Heart right ventricle (tissue), 16 donors: ENCODE measurements at regions of chr1 and their contacts with region 1.

Region 1: DNA sequence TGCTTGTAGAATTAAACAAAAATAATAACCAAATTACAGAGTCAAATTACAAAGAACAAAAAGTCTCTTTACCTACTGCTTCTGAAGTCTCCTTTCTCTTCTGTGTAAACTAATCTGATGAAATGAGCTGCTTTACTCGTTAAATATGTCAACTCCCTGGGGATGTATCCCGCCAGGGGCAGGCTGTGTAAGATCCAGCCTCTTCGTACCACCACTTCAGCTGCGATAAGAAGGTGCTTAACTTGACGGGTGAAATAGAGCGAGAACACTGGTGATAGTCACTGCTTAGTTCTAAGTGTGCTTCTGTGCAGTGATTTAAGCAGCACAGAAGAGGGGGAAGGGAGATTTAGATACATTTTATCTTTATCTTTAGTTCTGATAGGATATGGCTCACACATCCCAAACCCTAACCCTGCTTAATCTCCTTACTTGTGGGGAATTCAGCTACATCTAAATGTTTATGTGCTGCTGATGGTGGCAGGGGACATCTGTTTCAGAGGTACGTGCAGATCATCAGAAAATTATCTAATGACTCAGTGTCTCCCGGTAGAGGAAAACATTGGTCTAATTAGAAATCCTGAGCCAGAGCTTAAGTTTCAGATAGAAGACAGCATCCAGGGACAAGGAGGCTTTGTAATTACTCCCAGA is 46.0 kb downstream of the RHOU start:
- DNase-seq: peak in 1 of 2 donors; percentile 10
- ATAC-seq: peak in 5 of 8 donors; percentile 54 to 85 (median 74)
- H3K4me3 ChIP-seq: no peak overlapping the region
- H3K27ac ChIP-seq: peak overlapping the region in 1 of 10 donors; percentile 18
- H3K4me1 ChIP-seq: peaks cover 0 to 20% (median 8%) of the 10 kb centered on the region in 9 donors
- H3K27me3 ChIP-seq: peaks cover 0 to 58% (median 11%) of the 10 kb centered on the region in 7 donors
- CTCF ChIP-seq: no peak

Region 2: DNA sequence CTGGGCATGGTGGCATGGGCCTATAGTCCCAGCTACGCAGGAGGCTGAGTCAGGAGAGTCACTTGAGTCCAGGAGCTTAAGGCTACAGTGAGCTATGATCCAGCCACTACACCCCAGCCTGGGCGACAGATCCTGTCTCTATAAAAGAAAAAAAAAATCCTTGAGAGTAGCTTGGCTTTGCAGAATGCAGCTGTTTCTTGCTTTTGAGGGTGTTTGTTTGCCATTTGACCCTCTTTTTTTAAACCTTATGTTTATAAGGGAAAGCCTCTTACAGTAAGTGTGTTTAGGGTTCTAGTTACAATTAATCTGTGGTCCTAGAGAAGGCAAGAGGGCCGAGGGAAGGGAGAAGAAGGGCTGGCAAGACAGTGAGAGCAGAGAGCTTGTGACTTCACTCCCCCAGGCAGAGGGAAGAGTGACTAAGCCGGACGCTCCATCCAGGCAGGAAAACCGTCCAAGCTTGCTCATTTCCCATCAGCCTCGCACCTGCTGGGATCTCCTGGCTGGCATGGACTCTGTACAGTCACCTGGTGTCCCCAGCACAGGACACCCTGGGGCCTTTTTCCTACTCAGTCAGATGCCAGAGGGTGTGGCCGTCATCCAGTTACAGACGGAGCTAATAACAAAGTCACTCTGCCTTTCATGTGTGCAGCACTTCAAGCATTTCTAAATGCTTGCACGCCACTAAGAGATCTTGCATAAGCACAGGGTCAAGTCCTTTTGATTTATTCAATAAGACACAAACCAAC is 1966.4 kb before region 1 on chr1:
- intact Hi-C with region 1: loop called in 1 of 10 experiments (anchors 5 kb)
- DNase-seq: peak; percentile 23 to 74
- ATAC-seq: peak; percentile 76 to 95 (median 91)
- H3K4me3 ChIP-seq: no peak overlapping the region
- H3K27ac ChIP-seq: peak overlapping the region; percentile 40 to 89 (median 72)
- H3K4me1 ChIP-seq: peaks cover 6 to 50% (median 26%) of the 10 kb centered on the region in 9 donors
- H3K27me3 ChIP-seq: no peaks in the 10 kb centered on the region
- CTCF ChIP-seq: no peak

Region 3: DNA sequence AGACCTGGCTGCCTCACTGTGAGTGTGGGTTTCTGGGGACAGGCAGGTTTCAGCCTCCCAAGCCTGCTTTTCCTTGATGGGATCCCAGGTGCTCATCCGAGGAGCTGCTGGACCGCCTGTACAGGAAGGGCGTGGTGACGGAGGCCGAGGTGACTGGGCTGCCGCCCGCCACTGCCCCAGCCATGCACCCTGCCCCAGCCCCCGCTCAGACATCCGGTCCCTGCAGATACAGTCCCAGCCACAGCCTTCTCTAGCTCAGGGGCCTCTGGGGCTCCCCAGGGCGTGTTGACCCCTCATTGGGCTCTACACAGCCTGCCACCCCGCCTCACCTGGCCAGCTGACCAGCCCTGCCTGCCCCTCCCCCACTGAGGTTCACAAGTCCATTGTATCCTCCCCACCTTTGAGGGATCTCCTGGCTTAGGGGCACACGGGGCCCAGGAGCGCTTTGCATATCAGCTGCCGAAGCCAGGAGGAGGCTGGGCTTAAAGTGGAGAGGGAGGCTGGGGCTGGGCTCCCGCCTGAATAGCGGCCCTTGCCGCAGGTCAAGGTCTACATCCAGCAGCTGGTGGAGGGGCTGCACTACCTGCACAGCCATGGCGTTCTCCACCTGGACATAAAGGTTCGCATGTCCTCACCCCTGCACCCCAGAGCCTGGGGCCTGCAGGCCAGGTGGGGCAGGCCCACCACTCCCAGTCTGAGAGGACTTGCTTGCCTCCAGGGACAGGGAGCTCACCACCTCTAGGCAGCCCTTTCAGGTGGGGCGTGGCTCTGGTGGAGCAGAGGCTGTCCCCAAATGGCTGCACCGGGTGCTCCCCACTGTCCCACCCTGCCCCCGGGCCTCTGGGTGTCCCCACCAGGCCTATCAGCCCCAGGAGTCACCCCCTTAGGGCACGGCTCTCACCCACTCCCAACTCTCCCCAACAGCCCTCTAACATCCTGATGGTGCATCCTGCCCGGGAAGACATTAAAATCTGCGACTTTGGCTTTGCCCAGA is 413.2 kb before region 1 on chr1:
- intact Hi-C with region 1: no loop called
- DNase-seq: peak; percentile 35 to 36
- ATAC-seq: peak in 4 of 8 donors; percentile 1 to 23 (median 22)
- H3K4me3 ChIP-seq: peak overlapping the region in 8 of 10 donors; percentile 2 to 53 (median 30)
- H3K27ac ChIP-seq: peak overlapping the region; percentile 50 to 94 (median 84)
- H3K4me1 ChIP-seq: peaks cover 7 to 98% (median 43%) of the 10 kb centered on the region in 9 donors
- H3K27me3 ChIP-seq: no peaks in the 10 kb centered on the region
- CTCF ChIP-seq: no peak